Naive thymus-derived CD8-positive, alpha-beta T cell (primary cell): ENCODE measurements at regions of chr7 and their contacts with region 1.

Region 1: DNA sequence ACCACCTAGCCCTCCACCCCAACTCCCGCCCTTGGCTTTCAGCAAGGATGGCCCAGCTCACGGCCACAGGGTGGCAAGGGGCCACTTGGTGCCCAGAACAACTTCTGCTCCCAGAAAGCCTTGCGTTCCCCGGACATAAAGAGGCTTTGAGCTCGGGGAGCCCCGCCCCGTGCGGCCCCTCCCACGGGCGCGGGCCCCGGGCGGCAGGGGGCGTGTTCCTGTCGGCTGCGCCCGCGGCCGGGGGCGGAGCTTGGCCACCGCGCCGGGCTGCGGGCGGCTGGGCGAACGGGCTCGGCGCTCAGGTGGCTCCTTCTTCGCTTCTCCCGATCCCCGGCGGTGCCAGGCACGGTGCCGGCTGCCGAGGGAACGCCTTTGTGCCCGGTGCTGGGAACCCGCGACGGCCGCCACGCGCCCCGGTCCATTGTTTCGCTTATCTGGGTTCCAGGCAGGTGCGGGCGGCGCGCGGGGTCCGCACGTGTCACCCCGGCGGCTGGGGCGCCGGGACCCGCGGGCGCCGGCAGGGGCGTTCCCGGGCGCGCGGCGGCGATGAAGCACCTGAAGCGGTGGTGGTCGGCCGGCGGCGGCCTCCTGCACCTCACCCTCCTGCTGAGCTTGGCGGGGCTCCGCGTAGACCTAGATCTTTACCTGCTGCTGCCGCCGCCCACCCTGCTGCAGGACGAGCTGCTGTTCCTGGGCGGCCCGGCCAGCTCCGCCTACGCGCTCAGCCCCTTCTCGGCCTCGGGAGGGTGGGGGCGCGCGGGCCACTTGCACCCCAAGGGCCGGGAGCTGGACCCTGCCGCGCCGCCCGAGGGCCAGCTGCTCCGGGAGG is at the start of gene NFE2L3:
- DNase-seq: peak; percentile 60 to 84 (median 78)
- ATAC-seq: peak; percentile 72 to 75
- H3K4me3 Mint-ChIP-seq: peak within 1 kb of the TSS; percentile 73 to 94 (median 90)
- H3K27ac Mint-ChIP-seq: peak within 1 kb of the TSS; percentile 66 to 92 (median 90)
- H3K4me1 Mint-ChIP-seq: peaks cover 21 to 56% (median 47%) of the 10 kb centered on the region in 4 donors
- H3K27me3 Mint-ChIP-seq: no peaks in the 10 kb centered on the region
- polyA plus RNA-seq, gene NFE2L3: 1.4 to 4.3 (median 2.9) TPM

Region 2: GRCh38 chr7:26090927-26091519 is 61.1 kb before region 1 on chr7:
- POLR2A ChIA-PET with region 1: interaction called, 13 read pairs
- DNase-seq: peak in 3 of 10 donors; percentile 60 to 65 (median 62)
- ATAC-seq: peak; percentile 72 to 83
- H3K4me3 Mint-ChIP-seq: peak overlapping the region in 6 of 10 donors; percentile 11 to 67 (median 41)
- H3K27ac Mint-ChIP-seq: peak overlapping the region in 5 of 10 donors; percentile 0 to 49 (median 24)
- H3K4me1 Mint-ChIP-seq: peaks cover 12 to 25% (median 21%) of the 10 kb centered on the region in 4 donors
- H3K27me3 Mint-ChIP-seq: no peaks in the 10 kb centered on the region

Region 3: DNA sequence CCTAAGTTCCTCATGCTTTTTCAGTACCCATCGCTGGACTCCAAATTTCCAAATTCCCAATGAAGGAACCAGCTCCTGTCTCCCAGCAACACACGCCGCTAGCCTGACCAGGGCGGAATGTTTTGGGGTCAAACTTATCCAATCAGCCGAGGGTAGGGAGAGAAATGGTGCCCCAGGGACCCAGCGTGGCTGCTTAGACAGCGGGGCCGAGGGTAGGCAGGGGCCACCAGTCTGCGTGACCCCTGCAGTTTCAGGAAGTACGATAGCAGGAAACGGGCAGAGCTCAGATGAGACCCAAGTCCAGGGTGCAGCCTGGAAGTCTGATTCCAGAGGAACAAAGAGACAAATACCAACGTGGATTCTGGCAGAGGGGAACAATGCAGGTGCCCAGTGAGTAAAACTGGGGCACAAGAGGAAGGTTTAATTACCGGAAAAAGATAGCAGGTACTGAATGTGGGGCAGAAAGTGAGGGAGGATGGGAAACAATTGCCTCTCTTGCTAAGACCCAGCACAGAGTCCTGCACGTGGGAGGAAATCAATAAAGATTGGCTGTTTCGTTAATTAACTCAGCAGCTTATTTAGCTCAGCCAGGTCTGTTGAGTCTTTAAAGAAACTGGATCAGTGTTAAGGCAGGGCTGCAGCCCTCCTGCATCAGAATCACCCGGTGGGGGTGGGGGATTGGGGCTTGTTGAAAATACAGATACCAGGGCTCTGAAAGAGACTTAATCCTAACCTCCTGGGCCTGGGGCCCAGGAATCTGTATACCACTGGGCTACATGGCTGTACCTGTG is 50.6 kb before region 1 on chr7:
- POLR2A ChIA-PET with region 1: interaction called, 15 read pairs
- DNase-seq: peak in 1 of 10 donors; percentile 20
- ATAC-seq: peak; percentile 46 to 56
- H3K4me3 Mint-ChIP-seq: peak overlapping the region in 9 of 10 donors; percentile 70 to 88 (median 76)
- H3K27ac Mint-ChIP-seq: peak overlapping the region in 9 of 10 donors; percentile 18 to 94 (median 87)
- H3K4me1 Mint-ChIP-seq: peaks cover 14 to 60% (median 42%) of the 10 kb centered on the region in 4 donors
- H3K27me3 Mint-ChIP-seq: no peaks in the 10 kb centered on the region

Region 4: GRCh38 chr7:26112203-26112740 is 39.9 kb before region 1 on chr7:
- POLR2A ChIA-PET with region 1: interaction called, 10 read pairs
- DNase-seq: peak in 1 of 10 donors; percentile 40
- ATAC-seq: peak; percentile 47 to 57
- H3K4me3 Mint-ChIP-seq: no peak overlapping the region
- H3K27ac Mint-ChIP-seq: no peak overlapping the region
- H3K4me1 Mint-ChIP-seq: peaks cover 3 to 19% (median 8%) of the 10 kb centered on the region in 4 donors
- H3K27me3 Mint-ChIP-seq: peaks cover 0 to 1% (median 0%) of the 10 kb centered on the region in 5 donors

Region 5: GRCh38 chr7:26398756-26399501 is 246.8 kb after region 1 on chr7:
- POLR2A ChIA-PET with region 1: no interaction called
- DNase-seq: peak in 6 of 10 donors; percentile 0 to 24 (median 8)
- ATAC-seq: peak; percentile 50 to 66
- H3K4me3 Mint-ChIP-seq: peak overlapping the region; percentile 85 to 98 (median 90)
- H3K27ac Mint-ChIP-seq: peak overlapping the region in 2 of 10 donors; percentile 53 to 86
- H3K4me1 Mint-ChIP-seq: peaks cover 8 to 20% (median 14%) of the 10 kb centered on the region in 4 donors
- H3K27me3 Mint-ChIP-seq: peaks cover 31 to 47% (median 36%) of the 10 kb centered on the region in 5 donors

Region 6: GRCh38 chr7:26449175-26450165 is 297.3 kb after region 1 on chr7:
- POLR2A ChIA-PET with region 1: no interaction called
- DNase-seq: no peak
- ATAC-seq: no peak
- H3K4me3 Mint-ChIP-seq: no peak overlapping the region
- H3K27ac Mint-ChIP-seq: peak overlapping the region in 1 of 10 donors; percentile 35
- H3K4me1 Mint-ChIP-seq: no peaks in the 10 kb centered on the region
- H3K27me3 Mint-ChIP-seq: peaks cover 8 to 11% (median 10%) of the 10 kb centered on the region in 5 donors